ENCODE measurements at regions of chr19 and their contacts with region 1.

Region 1: DNA sequence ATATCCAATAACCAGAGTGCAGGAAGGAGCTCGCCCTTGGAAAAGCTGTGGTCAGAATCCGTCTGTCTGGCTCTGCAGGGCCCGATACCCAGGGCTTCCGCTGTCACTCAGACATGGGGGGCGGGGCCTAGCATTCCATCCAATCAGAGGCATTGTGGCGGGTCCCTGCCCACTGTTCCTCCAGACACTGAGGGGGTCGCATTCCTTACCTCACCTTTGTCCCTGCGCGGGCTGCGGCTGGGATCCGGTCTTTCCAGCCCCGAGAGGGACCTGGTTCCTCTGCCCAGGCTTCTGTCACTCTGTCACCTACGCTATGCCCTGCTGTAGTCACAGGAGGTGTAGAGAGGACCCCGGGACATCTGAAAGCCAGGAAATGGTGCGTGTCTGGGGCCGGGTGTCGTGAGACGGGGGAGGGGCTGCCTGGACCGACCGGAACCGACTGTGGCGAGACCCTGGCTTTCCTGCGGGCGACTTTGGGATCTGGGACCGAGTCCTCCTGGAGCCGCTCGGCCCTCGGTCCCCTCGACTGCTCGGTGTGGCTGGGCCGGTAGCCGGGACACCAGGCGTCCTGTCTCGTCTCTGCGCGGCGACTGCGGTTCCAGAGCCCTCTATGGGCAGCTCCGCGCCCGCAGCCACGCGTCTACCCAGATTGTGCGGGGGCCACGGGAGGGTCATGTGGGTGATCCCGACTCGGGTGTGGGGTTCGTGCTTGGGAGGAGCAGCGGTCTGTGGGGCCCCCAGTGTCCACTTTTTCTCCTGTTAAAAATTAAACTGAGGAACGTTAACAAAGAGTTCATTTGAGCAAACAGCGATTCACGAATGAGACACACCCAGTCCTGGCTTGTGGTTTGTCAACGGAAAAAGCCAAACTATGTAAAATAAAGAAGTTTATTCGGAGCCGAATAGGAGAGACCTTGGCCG is at the start of gene ZNF69:
- DNase-seq: peak; percentile 91 to 95
- ATAC-seq: peak; percentile 95
- H3K4me3 ChIP-seq: peak within 1 kb of the TSS; percentile 31 to 45
- H3K27ac ChIP-seq: peak within 1 kb of the TSS in 1 of 2 donors; percentile 87
- H3K4me1 ChIP-seq: no peaks in the 10 kb centered on the region
- H3K27me3 ChIP-seq: no peaks in the 10 kb centered on the region
- total RNA-seq, gene ZNF69: 8.1 to 10.8 TPM

Region 2: DNA sequence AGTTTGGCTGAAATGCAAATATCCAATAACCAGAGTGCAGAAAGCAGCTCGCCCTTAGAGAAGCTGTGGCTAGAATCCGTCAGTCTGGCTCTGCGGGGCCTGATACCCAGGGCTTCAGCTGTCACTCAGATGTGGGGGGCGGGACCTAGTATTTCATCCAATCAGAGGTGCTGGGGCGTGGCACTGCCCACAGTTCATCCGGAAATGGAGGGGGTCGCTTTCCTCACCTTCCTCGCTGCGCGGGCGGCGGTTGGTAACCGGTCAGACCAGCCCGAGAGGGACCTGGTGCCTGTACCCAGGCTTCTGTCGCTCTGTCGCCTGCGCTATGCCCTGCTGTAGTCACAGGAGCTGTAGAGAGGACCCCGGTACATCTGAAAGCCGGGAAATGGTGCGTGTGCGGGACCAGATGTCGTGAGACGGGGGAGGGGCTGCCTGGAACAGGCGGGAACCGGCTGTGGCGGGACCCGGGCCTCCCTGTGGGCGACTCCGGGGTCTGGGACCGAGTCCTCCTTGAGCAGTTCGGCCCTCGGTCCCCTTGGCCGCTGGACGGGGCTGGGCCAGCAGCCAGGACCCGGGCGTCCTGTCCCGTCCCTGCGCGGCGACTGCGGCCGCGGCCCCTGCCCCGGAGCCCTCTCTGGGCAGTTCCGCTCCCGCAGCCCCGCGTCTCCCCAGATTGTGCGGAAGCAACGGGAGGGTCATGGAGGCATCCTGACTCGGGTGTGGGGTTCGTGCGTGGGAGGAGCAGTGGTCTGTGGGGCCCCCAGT is 37.2 kb after region 1 on chr19 and contains the start of gene ZNF700:
- intact Hi-C with region 1: loop called in 1 of 2 experiments (anchors 5 kb)
- DNase-seq: peak; percentile 95 to 97
- ATAC-seq: peak; percentile 98
- H3K4me3 ChIP-seq: peak within 1 kb of the TSS; percentile 42 to 79
- H3K27ac ChIP-seq: peak within 1 kb of the TSS in 1 of 2 donors; percentile 49
- H3K4me1 ChIP-seq: peaks cover 0 to 2% of the 10 kb centered on the region in 2 donors
- H3K27me3 ChIP-seq: no peaks in the 10 kb centered on the region
- total RNA-seq, gene ZNF700: 11.6 to 19.2 TPM

Region 3: DNA sequence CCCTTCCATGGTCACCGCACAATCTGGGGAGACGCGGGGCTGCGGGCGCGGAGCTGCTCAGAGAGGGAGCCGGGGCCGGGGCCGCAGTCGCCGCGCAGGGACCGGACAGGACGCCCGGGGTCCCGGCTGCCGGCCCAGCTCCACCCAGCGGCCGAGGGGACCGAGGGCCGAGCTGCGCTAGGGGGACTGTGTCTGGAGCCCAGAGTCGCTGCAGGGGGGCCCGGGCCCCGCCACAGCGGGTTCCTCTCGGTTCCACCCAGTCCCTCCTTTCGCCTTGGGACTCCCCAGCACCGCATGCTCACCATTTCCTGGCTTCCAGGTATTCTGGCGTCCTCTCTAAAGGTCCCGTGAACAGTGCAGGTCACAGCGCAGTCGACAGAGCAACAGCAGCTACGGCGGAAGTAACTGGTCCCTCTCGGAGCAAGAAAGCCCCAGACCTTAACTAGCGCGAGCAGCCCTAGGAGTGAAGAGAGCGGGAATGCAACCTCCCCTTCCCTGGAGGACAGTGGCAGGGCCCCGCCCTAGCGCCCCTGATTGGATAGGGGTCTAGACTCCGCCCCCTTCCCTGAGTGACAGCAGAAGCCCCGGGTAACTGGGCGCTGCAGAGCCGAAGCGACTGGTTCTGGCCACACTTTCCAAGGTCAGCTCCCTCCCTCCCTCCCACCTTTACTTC is 164.8 kb after region 1 on chr19 and contains the start of gene ZNF878:
- intact Hi-C with region 1: loop called in 1 of 2 experiments (anchors 10 kb)
- DNase-seq: peak; percentile 94 to 95
- ATAC-seq: peak; percentile 98
- H3K4me3 ChIP-seq: peak within 1 kb of the TSS; percentile 49 to 55
- H3K27ac ChIP-seq: peak within 1 kb of the TSS in 1 of 2 donors; percentile 75
- H3K4me1 ChIP-seq: no peaks in the 10 kb centered on the region
- H3K27me3 ChIP-seq: no peaks in the 10 kb centered on the region
- total RNA-seq, gene ZNF878: 0.45 TPM in 1 of 2 donors, not detected in the other